Activated CD4-positive, alpha-beta T cell treated with anti-CD3 and anti-CD28 coated beads for 36 hours (primary cell): ENCODE measurements at regions of chr19 and their contacts with region 1.

Region 1: GRCh38 chr19:5063873-5064645 is 95.1 kb downstream of the KDM4B start:
- DNase-seq: no peak
- ATAC-seq: no peak
- H3K4me3 Mint-ChIP-seq: no peak overlapping the region
- H3K27ac Mint-ChIP-seq: no peak overlapping the region
- H3K4me1 Mint-ChIP-seq: no peaks in the 10 kb centered on the region
- H3K27me3 Mint-ChIP-seq: no peaks in the 10 kb centered on the region

Region 2: GRCh38 chr19:4909897-4910593 is 154.0 kb before region 1 on chr19:
- CTCF ChIA-PET with region 1: no interaction called
- POLR2A ChIA-PET with region 1: no interaction called
- intact Hi-C with region 1: no loop called
- DNase-seq: peak; percentile 98
- ATAC-seq: peak; percentile 78
- H3K4me3 Mint-ChIP-seq: peak overlapping the region; percentile 83
- H3K27ac Mint-ChIP-seq: peak overlapping the region; percentile 90
- H3K4me1 Mint-ChIP-seq: peaks cover 42% of the 10 kb centered on the region
- H3K27me3 Mint-ChIP-seq: no peaks in the 10 kb centered on the region

Region 3: GRCh38 chr19:5018224-5019015 is 45.6 kb before region 1 on chr19:
- CTCF ChIA-PET with region 1: no interaction called
- POLR2A ChIA-PET with region 1: no interaction called
- intact Hi-C with region 1: no loop called
- DNase-seq: no peak
- ATAC-seq: no peak
- H3K4me3 Mint-ChIP-seq: no peak overlapping the region
- H3K27ac Mint-ChIP-seq: no peak overlapping the region
- H3K4me1 Mint-ChIP-seq: peaks cover 2% of the 10 kb centered on the region
- H3K27me3 Mint-ChIP-seq: no peaks in the 10 kb centered on the region

Region 4: DNA sequence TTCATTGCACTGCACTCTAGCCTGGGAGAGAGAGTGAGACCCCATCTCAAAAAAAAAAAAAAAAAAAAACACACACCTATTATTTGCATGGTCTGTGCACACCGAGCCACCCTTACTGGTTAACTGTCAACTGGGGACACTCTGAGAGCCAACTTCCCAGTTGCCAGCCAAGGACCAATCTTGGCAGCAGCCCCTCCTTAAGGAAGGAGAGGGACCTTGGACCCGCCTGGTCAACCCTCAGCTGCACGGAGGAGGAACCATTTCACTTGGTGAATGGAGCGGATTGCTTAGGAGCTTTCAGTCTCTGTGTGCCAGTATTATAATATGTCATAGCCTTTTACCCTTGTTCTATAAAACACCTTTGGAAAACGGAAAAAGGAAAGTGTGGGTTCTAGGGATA is 591.4 kb after region 1 on chr19:
- CTCF ChIA-PET with region 1: no interaction called
- POLR2A ChIA-PET with region 1: no interaction called
- intact Hi-C with region 1: loop called in 1 of 2 experiments (anchors 5 kb)
- DNase-seq: no peak
- ATAC-seq: no peak
- H3K4me3 Mint-ChIP-seq: no peak overlapping the region
- H3K27ac Mint-ChIP-seq: no peak overlapping the region
- H3K4me1 Mint-ChIP-seq: no peaks in the 10 kb centered on the region
- H3K27me3 Mint-ChIP-seq: no peaks in the 10 kb centered on the region